ENCODE measurements at regions of chr7 and their contacts with region 1.

Region 1: GRCh38 chr7:77822269-77822668 is 23.7 kb downstream of the PHTF2 start:
- DNase-seq: no peak
- ATAC-seq: no peak
- H3K4me3 ChIP-seq: no peak overlapping the region
- H3K4me3 Mint-ChIP-seq: no peak overlapping the region
- H3K27ac ChIP-seq: no peak overlapping the region
- H3K27ac Mint-ChIP-seq: no peak overlapping the region
- H3K4me1 ChIP-seq: no peaks in the 10 kb centered on the region
- H3K4me1 Mint-ChIP-seq: peaks cover 30 to 51% (median 35%) of the 10 kb centered on the region in 7 donors
- H3K27me3 ChIP-seq: no peaks in the 10 kb centered on the region
- H3K27me3 Mint-ChIP-seq: no peaks in the 10 kb centered on the region

Region 2: DNA sequence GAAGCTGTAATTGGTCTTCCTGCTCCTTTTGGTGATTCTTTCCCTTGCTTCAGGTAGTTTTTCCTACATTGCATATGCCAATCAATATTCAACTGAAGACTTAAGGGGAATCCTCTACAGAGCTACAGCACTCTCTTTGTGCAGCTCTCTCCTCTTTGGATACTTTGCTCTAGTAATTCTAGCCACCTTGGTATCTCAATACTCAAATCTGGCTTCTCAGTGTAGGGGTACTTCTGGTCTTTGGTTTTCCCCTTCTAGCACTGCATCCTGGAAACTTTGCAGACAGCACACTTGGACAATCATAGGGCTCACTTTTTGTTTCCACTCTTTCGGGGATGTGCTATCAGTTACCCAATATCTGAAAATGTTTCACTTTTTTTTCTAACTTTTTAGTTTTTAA is 13.8 kb before region 1 on chr7:
- CTCF ChIA-PET with region 1: no interaction called
- POLR2A ChIA-PET with region 1: no interaction called
- intact Hi-C with region 1: loop called in 1 of 2 experiments (anchors 1 kb)
- DNase-seq: no peak
- ATAC-seq: no peak
- H3K4me3 ChIP-seq: no peak overlapping the region
- H3K4me3 Mint-ChIP-seq: peak overlapping the region in 1 of 10 donors; percentile 7
- H3K27ac ChIP-seq: no peak overlapping the region
- H3K27ac Mint-ChIP-seq: no peak overlapping the region
- H3K4me1 ChIP-seq: peaks cover 15 to 19% of the 10 kb centered on the region in 2 donors
- H3K4me1 Mint-ChIP-seq: peaks cover 30 to 70% (median 52%) of the 10 kb centered on the region in 7 donors
- H3K27me3 ChIP-seq: no peaks in the 10 kb centered on the region
- H3K27me3 Mint-ChIP-seq: no peaks in the 10 kb centered on the region